IMR-90 (cell line): ENCODE measurements at regions of chr14 and their contacts with region 1.

Region 1: GRCh38 chr14:73491256-73492042 is 716 bp downstream of the RIOX1 start:
- DNase-seq: peak; percentile 64
- ATAC-seq: peak; percentile 70
- H3K4me3 ChIP-seq: peak overlapping the region; percentile 82
- H3K27ac ChIP-seq: peak overlapping the region; percentile 85
- H3K4me1 ChIP-seq: peaks cover 11% of the 10 kb centered on the region
- H3K27me3 ChIP-seq: no peaks in the 10 kb centered on the region
- CTCF ChIP-seq: no peak
- POLR2A ChIP-seq: 0 out of 2 replicates have a peak, but pooled peaks have one; percentile 7
- RAD21 ChIP-seq: no peak

Region 2: GRCh38 chr14:72863216-72864006 is 628.0 kb before region 1 on chr14:
- CTCF ChIA-PET with region 1: no interaction called
- POLR2A ChIA-PET with region 1: interaction called, 11 read pairs
- dilution Hi-C with region 1: no loop called
- in situ Hi-C with region 1: no loop called
- intact Hi-C with region 1: no loop called
- DNase-seq: no peak
- ATAC-seq: no peak
- H3K4me3 ChIP-seq: no peak overlapping the region
- H3K27ac ChIP-seq: no peak overlapping the region
- H3K4me1 ChIP-seq: 0 out of 2 replicates have a peak, but pooled peaks cover 2% of the 10 kb centered on the region
- H3K27me3 ChIP-seq: no peaks in the 10 kb centered on the region
- CTCF ChIP-seq: no peak
- POLR2A ChIP-seq: no peak
- RAD21 ChIP-seq: no peak

Region 3: DNA sequence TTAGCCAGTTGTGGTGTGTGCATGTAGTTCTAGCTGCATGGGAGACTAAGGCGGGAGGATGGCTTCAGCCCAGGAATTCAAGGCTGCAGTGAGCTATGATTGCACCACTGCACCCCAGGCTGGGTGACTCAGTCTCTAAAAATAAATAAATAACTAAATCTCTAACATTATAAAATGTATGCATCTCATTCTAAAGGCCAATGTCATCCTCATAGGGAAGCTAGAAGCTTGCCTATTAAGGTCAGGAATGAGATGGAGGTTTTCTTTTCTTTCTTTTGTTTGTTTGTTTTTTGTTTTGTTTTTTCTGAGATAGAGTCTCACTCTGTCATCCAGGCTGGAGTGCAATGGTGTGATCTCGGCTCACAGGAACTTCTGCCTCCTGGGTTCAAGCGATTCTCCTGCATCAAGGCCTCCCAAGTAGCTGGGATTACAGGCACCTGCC is 302.9 kb before region 1 on chr14:
- CTCF ChIA-PET with region 1: no interaction called
- POLR2A ChIA-PET with region 1: no interaction called
- dilution Hi-C with region 1: no loop called
- in situ Hi-C with region 1: no loop called
- intact Hi-C with region 1: no loop called
- DNase-seq: peak; percentile 84
- ATAC-seq: peak; percentile 91
- H3K4me3 ChIP-seq: no peak overlapping the region
- H3K27ac ChIP-seq: peak overlapping the region; percentile 73
- H3K4me1 ChIP-seq: peaks cover 7% of the 10 kb centered on the region
- H3K27me3 ChIP-seq: no peaks in the 10 kb centered on the region
- CTCF ChIP-seq: no peak
- POLR2A ChIP-seq: no peak
- RAD21 ChIP-seq: no peak

Region 4: GRCh38 chr14:73438993-73439392 is 52.5 kb before region 1 on chr14:
- CTCF ChIA-PET with region 1: no interaction called
- POLR2A ChIA-PET with region 1: no interaction called
- dilution Hi-C with region 1: no loop called
- in situ Hi-C with region 1: no loop called
- intact Hi-C with region 1: no loop called
- DNase-seq: no peak
- ATAC-seq: no peak
- H3K4me3 ChIP-seq: no peak overlapping the region
- H3K27ac ChIP-seq: no peak overlapping the region
- H3K4me1 ChIP-seq: peaks cover 4% of the 10 kb centered on the region
- H3K27me3 ChIP-seq: no peaks in the 10 kb centered on the region
- CTCF ChIP-seq: no peak
- POLR2A ChIP-seq: no peak
- RAD21 ChIP-seq: no peak

Region 5: GRCh38 chr14:73591690-73592448 is 100.4 kb after region 1 on chr14 and contains the start of gene ACOT4:
- CTCF ChIA-PET with region 1: no interaction called
- POLR2A ChIA-PET with region 1: no interaction called
- dilution Hi-C with region 1: no loop called
- in situ Hi-C with region 1: no loop called
- intact Hi-C with region 1: no loop called
- DNase-seq: peak; percentile 20
- ATAC-seq: peak; percentile 92
- H3K4me3 ChIP-seq: peak within 1 kb of the TSS; percentile 44
- H3K27ac ChIP-seq: no peak within 1 kb of the TSS
- H3K4me1 ChIP-seq: no peaks in the 10 kb centered on the region
- H3K27me3 ChIP-seq: peaks cover 7% of the 10 kb centered on the region; the same call in 1 of the 2 replicates
- CTCF ChIP-seq: no peak
- POLR2A ChIP-seq: no peak
- RAD21 ChIP-seq: no peak
- total RNA-seq, gene ACOT4: 0.28 and 0.54 TPM in 2 replicates

Region 6: DNA sequence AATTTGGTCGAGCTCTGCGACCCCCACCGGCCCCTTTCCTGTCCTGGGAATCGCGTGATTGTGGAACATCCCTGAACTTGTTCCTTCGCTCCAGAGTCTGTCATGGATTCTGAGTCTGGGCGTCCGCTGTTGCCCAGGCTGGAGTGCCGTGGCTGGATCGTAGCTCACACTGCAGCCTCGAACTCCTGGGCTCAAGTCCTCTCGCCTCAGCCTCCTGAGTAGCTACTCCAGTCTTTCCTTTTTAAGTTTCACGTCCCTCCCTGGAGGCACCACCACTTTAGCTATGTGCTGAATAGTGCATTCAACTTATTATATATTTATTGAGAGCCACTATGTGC is 121.6 kb after region 1 on chr14:
- CTCF ChIA-PET with region 1: no interaction called
- POLR2A ChIA-PET with region 1: no interaction called
- dilution Hi-C with region 1: no loop called
- in situ Hi-C with region 1: no loop called
- intact Hi-C with region 1: loop called (anchors 5 kb)
- DNase-seq: no peak
- ATAC-seq: no peak; the same call in 1 of the 2 replicates
- H3K4me3 ChIP-seq: peak overlapping the region; percentile 77
- H3K27ac ChIP-seq: no peak overlapping the region; the same call in 1 of the 2 replicates
- H3K4me1 ChIP-seq: no peaks in the 10 kb centered on the region
- H3K27me3 ChIP-seq: 0 out of 2 replicates have a peak, but pooled peaks cover 3% of the 10 kb centered on the region
- CTCF ChIP-seq: no peak
- POLR2A ChIP-seq: no peak
- RAD21 ChIP-seq: no peak